ENCODE measurements at regions of chr5 and their contacts with region 1.

Region 1: GRCh38 chr5:33440482-33441240 is at the start of gene TARS1:
- DNase-seq: peak; percentile 95 to 100 (median 97)
- ATAC-seq: peak; percentile 91
- H3K4me3 ChIP-seq: peak within 1 kb of the TSS; percentile 94
- H3K27ac ChIP-seq: peak within 1 kb of the TSS; percentile 99
- H3K4me1 ChIP-seq: peaks cover 6 to 13% of the 10 kb centered on the region in 2 experiments; a peak in 4 of 5 replicates
- H3K27me3 ChIP-seq: no peaks in the 10 kb centered on the region
- CTCF ChIP-seq: no peak
- EP300 ChIP-seq: peak; percentile 39
- POLR2A ChIP-seq: peak; percentile 99
- RAD21 ChIP-seq: no peak
- polyA plus RNA-seq, gene TARS1: 263 to 497 TPM

Region 2: DNA sequence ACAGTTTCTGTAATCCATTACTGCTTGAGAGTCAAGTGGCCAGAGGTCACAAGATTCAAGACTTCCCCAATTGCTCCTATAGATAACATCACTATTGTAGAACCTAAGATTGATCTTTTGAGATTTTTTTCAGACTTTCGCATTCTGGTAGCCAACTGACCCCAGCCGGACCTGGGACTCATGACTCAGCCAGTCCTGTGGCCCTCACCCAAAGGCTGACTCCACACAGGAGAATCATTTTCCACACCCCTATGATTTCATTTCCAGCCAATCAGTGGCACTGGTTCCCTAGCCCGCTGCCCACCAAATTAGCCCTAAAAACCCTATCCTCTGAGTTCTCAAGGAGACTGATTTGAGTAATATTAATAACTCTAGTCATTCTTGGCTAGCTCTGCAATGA is 36.3 kb after region 1 on chr5:
- CTCF ChIA-PET with region 1: no interaction called
- POLR2A ChIA-PET with region 1: interaction called, 3 read pairs
- in situ Hi-C with region 1: no loop called
- intact Hi-C with region 1: loop called (anchors 2 kb)
- DNase-seq: no peak
- ATAC-seq: no peak
- H3K4me3 ChIP-seq: no peak overlapping the region
- H3K27ac ChIP-seq: no peak overlapping the region
- H3K4me1 ChIP-seq: peaks cover 0 to 19% of the 10 kb centered on the region in 2 experiments; a peak in 2 of 5 replicates
- H3K27me3 ChIP-seq: no peaks in the 10 kb centered on the region
- CTCF ChIP-seq: no peak
- EP300 ChIP-seq: no peak
- POLR2A ChIP-seq: no peak
- RAD21 ChIP-seq: no peak

Region 3: DNA sequence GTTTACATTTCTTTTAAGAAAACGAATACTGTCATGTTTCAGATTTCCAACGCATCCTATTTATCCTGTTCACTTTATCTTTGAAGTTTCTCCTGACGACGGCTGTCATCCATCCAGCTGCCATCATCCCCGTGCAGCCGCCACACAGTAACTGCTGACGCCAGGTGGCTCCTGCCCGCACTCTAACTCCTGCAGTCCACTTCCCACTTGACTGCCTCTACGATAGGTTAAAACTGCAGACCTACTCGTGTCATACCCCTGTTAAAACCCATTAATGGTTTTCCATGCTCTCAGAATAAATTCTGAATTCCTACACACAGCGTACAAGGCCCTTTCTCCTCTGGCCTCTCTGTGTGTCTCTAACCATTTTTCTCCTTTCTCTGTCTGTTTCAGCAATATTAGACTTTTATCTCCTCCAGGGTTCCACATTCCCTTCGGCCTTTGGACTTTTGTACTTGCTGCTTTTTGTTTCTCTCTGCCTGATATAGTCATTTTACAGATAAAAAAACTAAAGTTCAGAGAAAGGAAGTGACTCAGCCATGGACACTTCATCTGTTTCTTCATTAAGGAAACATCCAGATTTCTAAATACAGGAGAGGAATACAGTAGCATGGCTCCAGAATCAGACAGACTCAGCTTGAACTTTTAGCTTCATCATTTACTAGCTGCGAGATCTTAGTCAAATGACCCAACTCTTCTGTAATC is 366.2 kb after region 1 on chr5:
- CTCF ChIA-PET with region 1: no interaction called
- POLR2A ChIA-PET with region 1: no interaction called
- in situ Hi-C with region 1: no loop called
- intact Hi-C with region 1: loop called (anchors 10 kb)
- DNase-seq: peak in 1 of 4 experiments; percentile 9
- ATAC-seq: peak; percentile 66
- H3K4me3 ChIP-seq: no peak overlapping the region
- H3K27ac ChIP-seq: no peak overlapping the region
- H3K4me1 ChIP-seq: no peaks in the 10 kb centered on the region
- H3K27me3 ChIP-seq: no peaks in the 10 kb centered on the region; a peak in 2 of 5 replicates
- CTCF ChIP-seq: no peak
- EP300 ChIP-seq: no peak
- POLR2A ChIP-seq: no peak
- RAD21 ChIP-seq: 0 out of 4 replicates have a peak, but pooled peaks of 1 of the 2 experiments have one; percentile 17

Region 4: GRCh38 chr5:33936004-33936380 is 495.3 kb after region 1 on chr5:
- CTCF ChIA-PET with region 1: interaction called, 20 read pairs
- POLR2A ChIA-PET with region 1: no interaction called
- in situ Hi-C with region 1: no loop called
- intact Hi-C with region 1: loop called (anchors 1 kb)
- DNase-seq: peak; percentile 34 to 48 (median 46)
- ATAC-seq: peak; percentile 93
- H3K4me3 ChIP-seq: no peak overlapping the region
- H3K27ac ChIP-seq: no peak overlapping the region
- H3K4me1 ChIP-seq: peaks cover 0 to 18% of the 10 kb centered on the region in 2 experiments; a peak in 2 of 5 replicates
- H3K27me3 ChIP-seq: peaks cover 14 to 32% of the 10 kb centered on the region in 2 experiments
- CTCF ChIP-seq: no peak
- EP300 ChIP-seq: no peak
- POLR2A ChIP-seq: no peak
- RAD21 ChIP-seq: no peak

Region 5: DNA sequence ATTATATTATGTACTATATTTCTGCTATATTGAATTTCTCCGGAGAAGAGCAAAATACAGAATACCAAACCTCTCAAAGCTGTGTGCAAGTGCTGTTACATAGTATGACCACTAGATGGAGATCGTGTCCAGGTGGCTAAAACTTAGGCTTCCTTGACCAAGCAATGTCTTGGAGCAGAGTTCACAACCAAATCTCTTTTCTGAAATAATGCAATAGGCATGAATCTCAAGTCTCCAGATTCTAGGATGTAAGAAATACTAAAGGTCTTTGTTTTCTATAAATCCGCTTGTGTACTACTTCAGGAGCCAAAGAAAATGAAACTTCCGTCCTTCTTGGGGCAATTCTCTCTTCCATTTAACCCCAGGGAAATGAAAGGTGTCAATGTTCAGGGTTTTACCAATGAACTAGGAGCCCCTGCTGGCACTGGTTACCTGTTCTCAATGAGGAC is 1033.9 kb after region 1 on chr5:
- CTCF ChIA-PET with region 1: no interaction called
- POLR2A ChIA-PET with region 1: no interaction called
- in situ Hi-C with region 1: loop called (anchors 25 kb)
- intact Hi-C with region 1: loop called (anchors 10 kb)
- DNase-seq: peak; percentile 68 to 72 (median 70)
- ATAC-seq: peak; percentile 93
- H3K4me3 ChIP-seq: no peak overlapping the region
- H3K27ac ChIP-seq: no peak overlapping the region
- H3K4me1 ChIP-seq: no peaks in the 10 kb centered on the region
- H3K27me3 ChIP-seq: peaks cover 14 to 28% of the 10 kb centered on the region in 2 experiments; a peak in 4 of 5 replicates
- CTCF ChIP-seq: peak; percentile 84 to 95 (median 87)
- EP300 ChIP-seq: no peak
- POLR2A ChIP-seq: no peak
- RAD21 ChIP-seq: peak; percentile 91 to 94

Measured in K562 (cell line).